IMR-90 (cell line): ENCODE measurements at regions of chr2 and their contacts with region 1.

Region 1: GRCh38 chr2:143513081-143513480 is 383.9 kb downstream of the ARHGAP15 start:
- DNase-seq: peak; percentile 75
- ATAC-seq: peak; percentile 100
- H3K4me3 ChIP-seq: no peak overlapping the region
- H3K27ac ChIP-seq: no peak overlapping the region
- H3K4me1 ChIP-seq: no peaks in the 10 kb centered on the region; the same call in 1 of the 2 replicates
- H3K27me3 ChIP-seq: no peaks in the 10 kb centered on the region
- CTCF ChIP-seq: peak; percentile 84
- POLR2A ChIP-seq: no peak
- RAD21 ChIP-seq: peak; percentile 90

Region 2: GRCh38 chr2:143524119-143524553 is 11.1 kb after region 1 on chr2:
- CTCF ChIA-PET with region 1: interaction called, 11 read pairs
- POLR2A ChIA-PET with region 1: no interaction called
- dilution Hi-C with region 1: no loop called
- in situ Hi-C with region 1: no loop called
- intact Hi-C with region 1: no loop called
- DNase-seq: peak; percentile 54
- ATAC-seq: peak; percentile 72
- H3K4me3 ChIP-seq: no peak overlapping the region
- H3K27ac ChIP-seq: peak overlapping the region; percentile 73; the same call in 1 of the 2 replicates
- H3K4me1 ChIP-seq: peaks cover 9% of the 10 kb centered on the region
- H3K27me3 ChIP-seq: no peaks in the 10 kb centered on the region
- CTCF ChIP-seq: no peak
- POLR2A ChIP-seq: no peak
- RAD21 ChIP-seq: no peak

Region 3: DNA sequence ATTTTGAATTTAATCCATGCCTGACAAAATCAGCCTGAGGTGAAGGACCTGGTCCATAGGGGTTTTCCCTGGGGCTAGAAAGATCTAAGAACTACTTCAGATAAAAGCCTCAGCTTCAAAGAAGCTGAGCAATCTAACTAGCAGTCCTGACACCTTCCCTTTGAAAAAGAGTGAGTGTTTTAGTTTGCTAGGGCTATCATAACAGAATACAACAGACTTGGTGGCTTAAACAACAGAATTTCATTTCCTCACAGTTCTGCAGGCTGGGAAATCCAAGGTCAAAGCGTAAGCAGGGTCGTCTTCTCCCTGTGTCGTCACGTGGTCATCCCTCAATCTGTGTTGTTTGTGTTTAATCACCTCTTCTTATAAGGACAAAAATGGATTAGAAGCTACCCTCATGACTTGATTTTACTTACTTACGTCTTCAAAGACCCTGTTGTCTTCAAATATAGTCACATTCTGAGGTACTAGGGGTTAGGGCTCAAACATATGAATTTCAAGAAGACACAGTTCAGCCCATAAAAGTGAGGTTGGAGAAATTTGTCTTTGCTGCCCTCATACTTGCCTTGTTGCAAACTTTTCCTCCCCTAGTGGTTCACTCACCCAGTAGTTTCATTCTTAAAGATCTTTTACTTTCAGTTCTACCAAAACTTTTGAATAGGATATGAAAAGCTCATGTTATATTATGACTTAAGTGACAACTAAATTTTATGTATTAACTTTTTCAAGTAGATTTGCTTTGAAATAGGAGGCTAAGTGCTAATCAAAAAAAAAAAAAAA is 290.0 kb after region 1 on chr2:
- CTCF ChIA-PET with region 1: interaction called, 3 read pairs
- POLR2A ChIA-PET with region 1: no interaction called
- dilution Hi-C with region 1: no loop called
- in situ Hi-C with region 1: no loop called
- intact Hi-C with region 1: loop called (anchors 5 kb)
- DNase-seq: peak; percentile 28
- ATAC-seq: peak; percentile 13; the same call in 1 of the 2 replicates
- H3K4me3 ChIP-seq: no peak overlapping the region
- H3K27ac ChIP-seq: peak overlapping the region; percentile 85
- H3K4me1 ChIP-seq: peaks cover 18% of the 10 kb centered on the region
- H3K27me3 ChIP-seq: no peaks in the 10 kb centered on the region
- CTCF ChIP-seq: no peak
- POLR2A ChIP-seq: no peak
- RAD21 ChIP-seq: no peak